Mammary epithelial cell (primary cell): ENCODE measurements at regions of chr2 and their contacts with region 1.

Region 1: GRCh38 chr2:191051825-191052778 is 38.1 kb upstream of the STAT1 start:
- DNase-seq: peak; percentile 35
- H3K4me3 ChIP-seq: no peak overlapping the region
- H3K27ac ChIP-seq: no peak overlapping the region
- H3K4me1 ChIP-seq: no peaks in the 10 kb centered on the region
- H3K27me3 ChIP-seq: no peaks in the 10 kb centered on the region
- CTCF ChIP-seq: peak; percentile 54 to 60

Region 2: DNA sequence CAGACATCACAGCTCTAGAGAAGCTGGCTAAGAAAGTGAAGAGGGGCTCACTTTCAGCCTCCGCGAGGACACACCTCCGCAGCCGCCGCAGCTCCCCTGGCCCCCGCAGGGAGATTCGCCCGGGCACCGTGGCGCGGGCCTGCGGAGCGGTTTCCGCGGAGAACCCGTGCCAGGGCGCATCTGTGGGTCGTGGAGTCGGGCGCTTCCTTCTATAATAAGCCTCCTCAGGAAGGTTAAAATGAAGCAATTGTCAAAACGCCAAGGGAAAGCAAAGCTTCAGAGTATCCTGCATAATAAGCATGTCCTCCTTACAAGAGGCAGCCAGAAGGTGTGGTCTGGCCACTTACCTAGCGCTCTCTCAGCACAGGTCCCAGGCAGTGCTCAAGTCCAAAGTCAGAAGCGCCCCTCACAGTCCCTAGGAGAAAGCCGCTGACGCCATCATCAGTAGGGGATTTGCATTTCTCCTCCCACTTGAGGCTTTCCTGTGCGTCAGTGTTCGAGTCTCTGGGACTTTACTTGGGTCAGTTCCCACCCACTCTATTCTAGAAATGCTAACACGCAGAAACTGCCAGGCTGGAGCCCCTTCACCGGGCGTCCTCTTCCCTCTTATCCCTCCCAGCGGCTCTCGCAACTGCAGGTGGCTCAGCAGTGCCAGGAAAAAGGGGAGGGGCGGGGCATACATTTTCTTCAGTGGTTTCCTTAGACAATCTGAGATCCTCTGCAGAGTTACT is 98.7 kb after region 1 on chr2 and contains the start of gene STAT4:
- CTCF ChIA-PET with region 1: interaction called, 42 read pairs
- dilution Hi-C with region 1: loop called (anchors 25 kb)
- in situ Hi-C with region 1: loop called (anchors 5 kb)
- intact Hi-C with region 1: loop called (anchors 1 kb)
- DNase-seq: peak; percentile 64
- H3K4me3 ChIP-seq: peak within 1 kb of the TSS; percentile 47 to 59 (median 52)
- H3K27ac ChIP-seq: no peak within 1 kb of the TSS
- H3K4me1 ChIP-seq: peaks cover 21% of the 10 kb centered on the region
- H3K27me3 ChIP-seq: no peaks in the 10 kb centered on the region
- CTCF ChIP-seq: no peak
- total RNA-seq, gene STAT4: 2.5 to 4.5 TPM

Region 3: GRCh38 chr2:191255756-191256312 is 203.7 kb after region 1 on chr2:
- CTCF ChIA-PET with region 1: no interaction called
- dilution Hi-C with region 1: no loop called
- in situ Hi-C with region 1: no loop called
- intact Hi-C with region 1: no loop called
- DNase-seq: peak; percentile 37
- H3K4me3 ChIP-seq: no peak overlapping the region
- H3K27ac ChIP-seq: no peak overlapping the region
- H3K4me1 ChIP-seq: peaks cover 34% of the 10 kb centered on the region
- H3K27me3 ChIP-seq: no peaks in the 10 kb centered on the region
- CTCF ChIP-seq: no peak